B cell (primary cell): ENCODE measurements at regions of chr6 and their contacts with region 1.

Region 1: GRCh38 chr6:14638906-14639761 is 521.6 kb downstream of the CD83 start:
- DNase-seq: peak; percentile 79
- ATAC-seq: peak; percentile 60
- H3K4me3 ChIP-seq: peak overlapping the region; percentile 21 to 74 (median 25)
- H3K4me3 Mint-ChIP-seq: peak overlapping the region; percentile 85
- H3K27ac ChIP-seq: peak overlapping the region; percentile 94
- H3K27ac Mint-ChIP-seq: peak overlapping the region; percentile 98
- H3K4me1 ChIP-seq: peaks cover 77 to 81% of the 10 kb centered on the region in 2 donors
- H3K4me1 Mint-ChIP-seq: peaks cover 87% of the 10 kb centered on the region
- H3K27me3 ChIP-seq: no peaks in the 10 kb centered on the region
- H3K27me3 Mint-ChIP-seq: no peaks in the 10 kb centered on the region
- CTCF ChIP-seq: no peak

Region 2: DNA sequence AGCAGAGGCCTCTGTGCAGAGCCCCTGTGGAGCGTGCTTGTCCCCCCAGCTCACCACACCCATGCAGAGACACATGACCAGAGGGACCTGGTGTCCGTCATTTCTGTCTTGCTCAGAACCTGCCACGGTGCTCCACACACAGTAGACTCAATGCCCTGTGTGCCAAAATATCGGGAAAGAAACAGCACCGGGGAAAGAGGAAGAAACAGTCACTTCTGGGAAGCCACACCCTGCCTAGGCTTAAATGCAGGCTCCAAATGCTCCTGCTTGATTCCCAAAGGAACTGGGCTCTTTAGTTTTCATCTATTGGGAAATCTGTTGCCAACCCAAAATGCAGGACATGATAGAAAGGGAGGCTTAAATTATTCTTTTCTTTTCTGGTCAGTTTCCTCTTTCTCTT is 17.6 kb before region 1 on chr6:
- CTCF ChIA-PET with region 1: no interaction called
- POLR2A ChIA-PET with region 1: no interaction called
- intact Hi-C with region 1: no loop called
- DNase-seq: no peak
- ATAC-seq: no peak
- H3K4me3 ChIP-seq: no peak overlapping the region
- H3K4me3 Mint-ChIP-seq: peak overlapping the region; percentile 14
- H3K27ac ChIP-seq: no peak overlapping the region
- H3K27ac Mint-ChIP-seq: no peak overlapping the region
- H3K4me1 ChIP-seq: peaks cover 16 to 25% of the 10 kb centered on the region in 2 donors
- H3K4me1 Mint-ChIP-seq: peaks cover 39% of the 10 kb centered on the region
- H3K27me3 ChIP-seq: no peaks in the 10 kb centered on the region
- H3K27me3 Mint-ChIP-seq: no peaks in the 10 kb centered on the region
- CTCF ChIP-seq: no peak

Region 3: DNA sequence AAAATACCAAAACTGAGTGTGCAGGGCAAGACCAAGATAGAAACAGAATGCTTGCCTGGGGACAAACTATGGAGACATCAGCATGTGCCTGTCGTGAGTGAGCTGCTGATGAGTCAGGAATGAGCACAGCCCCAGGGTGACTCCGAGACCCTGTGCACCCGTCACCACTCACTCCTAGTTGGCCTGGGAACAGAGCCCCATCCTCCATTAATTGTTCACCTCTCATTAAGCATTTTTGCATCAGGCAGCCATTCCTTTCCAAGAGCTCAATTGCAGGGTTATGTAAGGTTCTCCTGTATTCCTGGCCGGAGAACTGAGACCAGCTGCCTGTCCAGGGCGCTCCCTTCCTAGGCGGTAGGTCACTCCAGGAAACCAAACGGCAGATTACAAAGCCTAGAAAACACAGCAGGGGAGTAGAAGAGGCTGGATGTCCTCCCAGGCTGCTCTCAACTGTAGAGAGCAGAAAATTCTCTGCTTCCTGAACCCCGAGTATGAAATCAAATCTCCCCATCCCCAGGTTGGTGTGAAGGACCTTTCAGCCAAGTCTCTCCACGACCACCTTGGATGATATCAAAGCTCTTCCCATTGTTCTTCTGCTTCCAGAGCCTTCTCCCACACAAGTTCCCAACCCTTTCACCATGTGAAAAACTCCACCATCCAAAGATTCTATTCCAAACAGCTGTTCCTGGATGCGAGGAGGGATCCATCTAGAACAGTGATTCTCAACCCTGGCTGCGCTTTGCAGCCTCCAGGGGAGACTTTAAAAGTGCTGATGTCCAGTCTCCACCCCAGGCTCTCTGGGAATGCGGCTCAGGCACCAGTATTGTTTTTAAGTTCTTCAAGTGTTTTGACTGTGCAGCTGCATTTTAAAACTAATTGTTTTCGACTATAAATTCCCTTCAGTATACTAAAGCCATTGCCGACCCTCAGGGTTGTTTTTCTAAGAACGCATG is 74.2 kb after region 1 on chr6:
- CTCF ChIA-PET with region 1: no interaction called
- POLR2A ChIA-PET with region 1: no interaction called
- intact Hi-C with region 1: no loop called
- DNase-seq: no peak
- ATAC-seq: no peak
- H3K4me3 ChIP-seq: no peak overlapping the region
- H3K4me3 Mint-ChIP-seq: no peak overlapping the region
- H3K27ac ChIP-seq: no peak overlapping the region
- H3K27ac Mint-ChIP-seq: no peak overlapping the region
- H3K4me1 ChIP-seq: peaks cover 37 to 41% of the 10 kb centered on the region in 2 donors
- H3K4me1 Mint-ChIP-seq: peaks cover 44% of the 10 kb centered on the region
- H3K27me3 ChIP-seq: no peaks in the 10 kb centered on the region
- H3K27me3 Mint-ChIP-seq: no peaks in the 10 kb centered on the region
- CTCF ChIP-seq: no peak

Region 4: DNA sequence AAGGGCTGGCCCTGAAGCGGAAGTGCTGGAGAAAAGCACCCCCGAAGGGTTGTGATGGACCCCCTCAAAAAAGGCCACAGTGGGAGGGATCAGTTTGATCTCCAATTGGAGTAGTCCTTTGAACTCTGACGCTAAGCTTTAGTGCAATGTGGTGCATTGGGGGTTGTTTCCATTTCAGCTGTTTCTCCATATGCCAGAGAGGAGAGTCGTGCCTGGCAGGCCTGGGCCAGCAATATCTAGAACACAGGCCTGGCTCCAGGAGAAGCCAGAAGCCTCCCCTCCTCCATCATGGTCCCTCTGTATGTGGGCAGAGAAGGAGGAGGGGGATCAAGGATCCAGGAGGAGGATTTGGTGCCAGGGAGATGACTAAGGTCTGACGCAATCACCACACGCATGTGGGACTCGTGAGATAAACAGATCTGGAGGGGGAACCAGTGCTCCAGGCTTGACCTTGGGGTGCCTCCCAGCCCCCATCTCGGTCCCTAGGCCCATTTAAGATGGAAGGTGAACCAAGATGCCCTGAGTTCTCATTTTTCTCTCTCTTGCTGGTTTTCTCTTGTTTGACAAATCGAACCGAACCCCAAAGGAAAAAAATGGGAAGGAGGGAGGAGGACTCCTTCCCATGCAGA is 89.4 kb after region 1 on chr6:
- CTCF ChIA-PET with region 1: no interaction called
- POLR2A ChIA-PET with region 1: no interaction called
- intact Hi-C with region 1: loop called (anchors 5 kb)
- DNase-seq: no peak
- ATAC-seq: no peak
- H3K4me3 ChIP-seq: peak overlapping the region in 1 of 5 experiments; percentile 15
- H3K4me3 Mint-ChIP-seq: peak overlapping the region; percentile 75
- H3K27ac ChIP-seq: peak overlapping the region; percentile 96 to 97
- H3K27ac Mint-ChIP-seq: peak overlapping the region; percentile 96
- H3K4me1 ChIP-seq: peaks cover 68 to 69% of the 10 kb centered on the region in 2 donors
- H3K4me1 Mint-ChIP-seq: peaks cover 81% of the 10 kb centered on the region
- H3K27me3 ChIP-seq: no peaks in the 10 kb centered on the region
- H3K27me3 Mint-ChIP-seq: no peaks in the 10 kb centered on the region
- CTCF ChIP-seq: no peak